ENCODE measurements at regions of chr6 and their contacts with region 1.

Region 1: DNA sequence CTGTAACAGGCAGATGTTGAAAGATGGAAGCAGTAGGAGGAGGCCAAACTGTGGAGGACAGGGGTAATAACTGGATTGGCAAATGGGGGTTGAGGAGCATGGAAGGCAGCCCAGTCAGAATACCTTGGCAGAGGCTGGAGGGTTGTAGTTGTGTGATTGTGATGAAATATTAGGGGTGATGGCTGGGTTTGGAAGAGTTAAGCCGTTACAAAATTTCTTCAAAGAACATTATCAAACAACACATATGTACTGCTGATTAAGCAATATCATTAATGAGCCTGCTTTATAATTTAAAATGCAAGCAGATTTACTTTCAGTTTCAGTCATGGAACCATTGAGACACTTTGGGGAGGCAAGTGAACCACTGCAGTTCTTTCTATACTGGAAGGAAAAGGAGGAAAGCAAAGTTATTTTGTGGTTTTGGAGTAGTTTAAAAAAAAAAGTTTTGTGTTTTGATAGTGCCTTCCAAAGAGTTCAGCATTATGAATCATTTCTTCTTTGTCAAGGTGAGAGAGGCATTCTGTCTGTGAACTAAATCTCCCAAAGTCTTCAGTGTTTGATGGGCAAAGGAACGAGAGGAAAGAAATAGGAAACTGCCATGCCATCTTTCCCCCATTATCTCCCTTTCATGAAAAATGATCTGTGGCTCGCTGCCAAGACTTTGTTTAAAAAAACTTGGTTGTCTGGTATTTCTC is 20.7 kb downstream of the FOXO3 start:
- DNase-seq: peak in 1 of 9 donors; percentile 2
- ATAC-seq: peak; percentile 36
- H3K4me3 ChIP-seq: peak overlapping the region; percentile 10
- H3K4me3 Mint-ChIP-seq: peak overlapping the region; percentile 1 to 80 (median 68)
- H3K27ac ChIP-seq: no peak overlapping the region
- H3K27ac Mint-ChIP-seq: peak overlapping the region in 8 of 9 donors; percentile 13 to 83 (median 71)
- H3K4me1 ChIP-seq: peaks cover 12 to 25% of the 10 kb centered on the region in 2 donors
- H3K4me1 Mint-ChIP-seq: peaks cover 19 to 84% (median 69%) of the 10 kb centered on the region in 7 donors
- H3K27me3 ChIP-seq: no peaks in the 10 kb centered on the region
- H3K27me3 Mint-ChIP-seq: peaks cover 0 to 3% (median 0%) of the 10 kb centered on the region in 5 donors

Region 2: GRCh38 chr6:108565893-108566292 is 15.5 kb before region 1 on chr6:
- CTCF ChIA-PET with region 1: no interaction called
- POLR2A ChIA-PET with region 1: interaction called, 3 read pairs
- intact Hi-C with region 1: loop called in 1 of 2 experiments (anchors 2 kb)
- DNase-seq: no peak
- ATAC-seq: peak; percentile 59
- H3K4me3 ChIP-seq: no peak overlapping the region
- H3K4me3 Mint-ChIP-seq: peak overlapping the region in 9 of 10 donors; percentile 8 to 75 (median 62)
- H3K27ac ChIP-seq: no peak overlapping the region
- H3K27ac Mint-ChIP-seq: peak overlapping the region in 8 of 9 donors; percentile 0 to 84 (median 48)
- H3K4me1 ChIP-seq: peaks cover 32 to 36% of the 10 kb centered on the region in 2 donors
- H3K4me1 Mint-ChIP-seq: peaks cover 46 to 81% (median 68%) of the 10 kb centered on the region in 7 donors
- H3K27me3 ChIP-seq: no peaks in the 10 kb centered on the region
- H3K27me3 Mint-ChIP-seq: peaks cover 0 to 41% (median 0%) of the 10 kb centered on the region in 5 donors

Region 3: DNA sequence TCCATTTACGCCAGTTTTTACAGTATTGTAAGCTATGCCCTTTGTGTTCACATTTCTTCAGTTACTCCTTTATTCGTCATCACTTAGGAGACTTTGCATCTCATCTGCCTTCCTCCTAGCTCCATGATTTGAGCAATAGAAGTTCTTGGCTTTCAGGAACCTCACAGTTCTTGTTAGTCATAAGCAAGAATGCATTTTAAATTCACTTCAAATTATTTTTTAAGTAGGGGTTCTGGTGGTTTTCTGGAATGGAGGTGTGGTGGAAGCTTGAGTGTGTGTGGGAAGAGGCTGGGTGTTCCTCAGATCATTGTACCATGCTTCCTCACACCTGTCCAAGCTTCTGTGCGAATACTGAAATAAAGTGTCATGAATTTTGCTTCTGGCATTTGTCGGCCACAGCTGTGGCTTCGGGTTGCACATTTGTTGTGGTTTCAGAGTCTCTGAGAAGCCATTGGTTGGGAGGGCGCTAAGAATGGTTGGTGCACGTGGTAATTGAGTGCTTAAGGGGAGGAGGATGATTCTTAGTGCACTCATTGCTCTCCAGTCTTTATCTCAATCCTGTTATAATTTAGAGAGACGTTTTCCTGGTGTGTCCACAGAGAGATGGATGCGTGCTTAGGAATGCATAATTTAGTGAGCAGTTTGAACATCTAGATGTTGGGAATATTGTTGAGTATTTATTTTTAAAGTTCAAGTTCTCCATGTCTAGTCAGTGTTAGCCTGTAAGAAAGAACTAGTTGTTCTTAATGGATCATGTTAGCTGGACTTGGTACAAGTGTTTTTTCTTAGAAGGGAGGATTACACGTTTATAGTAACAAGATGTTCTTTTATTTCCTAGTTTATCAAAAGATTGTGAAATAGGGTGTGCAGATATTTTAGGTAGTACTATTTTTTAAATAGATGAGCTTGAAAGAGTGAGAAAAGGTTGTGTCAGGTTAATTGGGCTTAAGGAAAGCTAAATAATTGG is 11.3 kb after region 1 on chr6:
- CTCF ChIA-PET with region 1: no interaction called
- POLR2A ChIA-PET with region 1: interaction called, 3 read pairs
- intact Hi-C with region 1: loop called in 1 of 2 experiments (anchors 2 kb)
- DNase-seq: peak in 7 of 9 donors; percentile 24 to 50 (median 37)
- ATAC-seq: peak; percentile 84
- H3K4me3 ChIP-seq: no peak overlapping the region
- H3K4me3 Mint-ChIP-seq: peak overlapping the region; percentile 19 to 61 (median 36)
- H3K27ac ChIP-seq: no peak overlapping the region
- H3K27ac Mint-ChIP-seq: peak overlapping the region in 3 of 9 donors; percentile 33 to 50 (median 44)
- H3K4me1 ChIP-seq: peaks cover 26 to 29% of the 10 kb centered on the region in 2 donors
- H3K4me1 Mint-ChIP-seq: peaks cover 28 to 86% (median 73%) of the 10 kb centered on the region in 7 donors
- H3K27me3 ChIP-seq: no peaks in the 10 kb centered on the region
- H3K27me3 Mint-ChIP-seq: peaks cover 0 to 12% (median 0%) of the 10 kb centered on the region in 5 donors

Region 4: DNA sequence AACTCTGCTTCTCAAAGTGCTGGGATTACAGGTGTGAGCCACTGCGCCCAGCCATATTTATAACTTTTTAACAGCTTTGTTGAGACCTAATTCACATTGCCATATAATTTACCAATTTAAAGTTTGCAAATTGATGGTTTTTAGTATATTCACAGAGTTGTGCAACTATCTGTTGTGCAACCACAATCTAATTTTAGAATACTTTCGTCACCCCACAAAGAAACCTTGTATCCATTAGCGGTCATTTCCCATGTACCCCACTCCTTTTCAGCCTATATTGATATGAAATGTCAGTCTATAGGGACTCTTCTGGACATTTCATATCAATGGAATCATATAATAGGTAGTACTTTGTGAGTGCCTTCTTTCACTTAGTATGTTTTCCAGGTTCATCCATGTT is 35.2 kb after region 1 on chr6:
- CTCF ChIA-PET with region 1: no interaction called
- POLR2A ChIA-PET with region 1: no interaction called
- intact Hi-C with region 1: loop called in 1 of 2 experiments (anchors 5 kb)
- DNase-seq: no peak
- ATAC-seq: no peak
- H3K4me3 ChIP-seq: no peak overlapping the region
- H3K4me3 Mint-ChIP-seq: no peak overlapping the region
- H3K27ac ChIP-seq: no peak overlapping the region
- H3K27ac Mint-ChIP-seq: no peak overlapping the region
- H3K4me1 ChIP-seq: peaks cover 0 to 8% of the 10 kb centered on the region in 2 donors
- H3K4me1 Mint-ChIP-seq: peaks cover 0 to 73% (median 60%) of the 10 kb centered on the region in 7 donors
- H3K27me3 ChIP-seq: no peaks in the 10 kb centered on the region
- H3K27me3 Mint-ChIP-seq: peaks cover 0 to 21% (median 0%) of the 10 kb centered on the region in 5 donors

Measured in naive thymus-derived CD4-positive, alpha-beta T cell (primary cell).